Adrenal gland (tissue), 19 donors: ENCODE measurements at regions of chr7 and their contacts with region 1.

Region 1: DNA sequence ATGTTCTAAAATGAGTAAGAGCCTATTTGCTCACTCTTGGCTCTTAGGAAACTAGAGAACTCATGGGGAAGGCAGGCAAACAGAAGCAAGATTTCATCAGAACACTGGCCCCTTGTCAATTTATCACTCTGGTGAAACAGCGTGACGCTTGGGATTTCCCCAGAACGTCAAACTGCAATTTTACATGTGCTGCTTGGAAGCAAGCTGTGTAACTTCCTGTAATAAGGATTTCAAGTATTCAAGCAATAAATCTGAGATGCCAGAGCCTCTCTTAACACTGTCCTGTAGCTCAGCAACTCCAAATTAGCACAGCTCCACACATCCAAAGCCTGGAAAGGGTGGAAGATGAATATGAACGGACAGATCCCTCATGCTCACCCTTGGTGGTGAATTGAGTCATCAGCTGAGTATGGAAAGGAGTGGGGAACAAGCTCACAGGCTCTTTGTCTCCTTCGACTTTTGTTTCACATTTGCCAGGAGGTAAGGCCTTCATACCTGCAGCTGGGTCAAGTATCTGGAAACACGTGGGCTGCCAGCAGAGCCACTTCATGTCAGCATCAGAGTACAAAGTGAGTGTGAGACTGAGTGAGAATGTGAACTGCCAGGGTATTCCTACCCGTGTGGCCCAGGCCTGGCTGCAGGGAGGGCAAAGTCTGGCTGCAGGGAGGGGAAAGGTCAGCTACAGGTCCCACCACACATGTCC is 140.4 kb upstream of the NAMPT start:
- DNase-seq: peak; percentile 73 to 94 (median 91)
- H3K4me3 ChIP-seq: no peak overlapping the region
- H3K27ac ChIP-seq: peak overlapping the region in 4 of 5 donors; percentile 21 to 86 (median 66)
- H3K4me1 ChIP-seq: peaks cover 25 to 42% of the 10 kb centered on the region in 2 donors
- H3K27me3 ChIP-seq: no peaks in the 10 kb centered on the region
- CTCF ChIP-seq: no peak
- POLR2A ChIP-seq: peak in 1 of 2 donors; percentile 29

Region 2: DNA sequence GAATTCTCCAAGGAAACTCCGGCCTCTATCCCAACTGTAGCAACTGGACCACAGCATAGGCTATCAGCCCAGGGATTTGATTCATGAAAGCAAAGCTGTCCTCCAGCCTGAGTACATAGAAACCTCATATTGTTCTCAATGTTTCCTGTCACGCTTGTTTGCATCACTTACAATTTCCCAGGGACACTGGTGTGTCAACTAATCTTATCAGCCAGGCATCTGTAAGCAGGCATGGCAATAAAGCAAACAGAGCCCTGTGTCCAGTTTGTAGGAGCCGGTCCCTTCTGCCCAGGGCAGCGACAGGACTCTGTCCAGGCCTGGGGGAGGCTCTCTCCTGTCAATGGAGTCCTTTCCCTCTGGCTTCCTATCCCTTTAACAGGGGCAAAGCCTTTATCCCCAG is 485.1 kb before region 1 on chr7:
- intact Hi-C with region 1: loop called in 1 of 2 experiments (anchors 10 kb)
- DNase-seq: no peak
- H3K4me3 ChIP-seq: no peak overlapping the region
- H3K27ac ChIP-seq: no peak overlapping the region
- H3K4me1 ChIP-seq: no peaks in the 10 kb centered on the region
- H3K27me3 ChIP-seq: no peaks in the 10 kb centered on the region
- CTCF ChIP-seq: no peak
- POLR2A ChIP-seq: no peak

Region 3: GRCh38 chr7:106285051-106285854 is 139.9 kb before region 1 on chr7:
- intact Hi-C with region 1: loop called in 1 of 2 experiments (anchors 10 kb)
- DNase-seq: peak; percentile 98 to 100 (median 99)
- H3K4me3 ChIP-seq: peak overlapping the region in 3 of 4 donors; percentile 53 to 95 (median 85)
- H3K27ac ChIP-seq: peak overlapping the region; percentile 84 to 99 (median 97)
- H3K4me1 ChIP-seq: peaks cover 21 to 33% of the 10 kb centered on the region in 2 donors
- H3K27me3 ChIP-seq: no peaks in the 10 kb centered on the region
- CTCF ChIP-seq: no peak
- POLR2A ChIP-seq: peak; percentile 72 to 73